Uterus (tissue), 4 donors: ENCODE measurements at regions of chr10 and their contacts with region 1.

Region 1: DNA sequence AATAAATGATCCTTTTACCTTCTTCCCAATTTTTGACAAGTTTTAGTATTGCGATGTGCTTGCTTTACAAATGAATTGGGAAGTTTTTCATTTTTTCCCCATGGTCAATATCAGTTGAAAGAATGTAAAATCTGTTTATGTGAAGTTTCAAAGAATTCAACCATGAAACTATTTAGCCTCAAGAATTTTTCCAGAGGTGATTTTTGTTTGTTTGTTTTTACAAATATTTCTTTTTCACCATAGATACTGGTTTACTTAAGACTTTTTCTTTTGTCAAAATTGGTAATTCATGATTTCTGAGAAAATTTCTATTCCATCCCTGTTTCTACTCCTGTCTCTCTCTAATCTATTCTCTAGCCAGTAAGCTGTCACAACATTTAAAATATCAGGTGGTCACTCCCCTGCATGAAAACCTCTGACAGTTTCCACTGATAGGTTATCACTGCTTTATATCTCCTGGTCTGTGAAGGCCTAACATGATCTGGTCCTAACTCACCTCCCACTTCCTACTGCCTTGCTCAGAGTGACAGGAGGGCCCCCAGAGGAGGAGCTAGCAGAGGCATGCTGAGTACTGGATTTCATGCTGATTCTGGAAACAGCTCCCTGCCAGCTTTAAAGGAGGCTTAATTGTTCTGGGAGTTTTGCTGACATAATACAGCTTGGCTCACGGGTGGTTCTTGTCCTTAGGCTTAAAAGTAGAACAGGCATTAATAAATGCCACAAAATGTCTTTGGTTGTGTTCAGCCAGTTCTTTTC is 7.6 kb upstream of the ARMS2 start:
- DNase-seq: no peak
- H3K4me3 ChIP-seq: no peak overlapping the region
- H3K27ac ChIP-seq: no peak overlapping the region
- H3K4me1 ChIP-seq: no peaks in the 10 kb centered on the region
- H3K27me3 ChIP-seq: no peaks in the 10 kb centered on the region
- CTCF ChIP-seq: no peak
- POLR2A ChIP-seq: no peak

Region 2: GRCh38 chr10:122565728-122566206 is 118.9 kb after region 1 on chr10:
- intact Hi-C with region 1: loop called (anchors 10 kb)
- DNase-seq: peak; percentile 85 to 86
- H3K4me3 ChIP-seq: no peak overlapping the region
- H3K27ac ChIP-seq: no peak overlapping the region
- H3K4me1 ChIP-seq: no peaks in the 10 kb centered on the region
- H3K27me3 ChIP-seq: no peaks in the 10 kb centered on the region
- CTCF ChIP-seq: peak; percentile 82 to 92 (median 86)
- POLR2A ChIP-seq: peak in 1 of 2 donors; percentile 17

Region 3: DNA sequence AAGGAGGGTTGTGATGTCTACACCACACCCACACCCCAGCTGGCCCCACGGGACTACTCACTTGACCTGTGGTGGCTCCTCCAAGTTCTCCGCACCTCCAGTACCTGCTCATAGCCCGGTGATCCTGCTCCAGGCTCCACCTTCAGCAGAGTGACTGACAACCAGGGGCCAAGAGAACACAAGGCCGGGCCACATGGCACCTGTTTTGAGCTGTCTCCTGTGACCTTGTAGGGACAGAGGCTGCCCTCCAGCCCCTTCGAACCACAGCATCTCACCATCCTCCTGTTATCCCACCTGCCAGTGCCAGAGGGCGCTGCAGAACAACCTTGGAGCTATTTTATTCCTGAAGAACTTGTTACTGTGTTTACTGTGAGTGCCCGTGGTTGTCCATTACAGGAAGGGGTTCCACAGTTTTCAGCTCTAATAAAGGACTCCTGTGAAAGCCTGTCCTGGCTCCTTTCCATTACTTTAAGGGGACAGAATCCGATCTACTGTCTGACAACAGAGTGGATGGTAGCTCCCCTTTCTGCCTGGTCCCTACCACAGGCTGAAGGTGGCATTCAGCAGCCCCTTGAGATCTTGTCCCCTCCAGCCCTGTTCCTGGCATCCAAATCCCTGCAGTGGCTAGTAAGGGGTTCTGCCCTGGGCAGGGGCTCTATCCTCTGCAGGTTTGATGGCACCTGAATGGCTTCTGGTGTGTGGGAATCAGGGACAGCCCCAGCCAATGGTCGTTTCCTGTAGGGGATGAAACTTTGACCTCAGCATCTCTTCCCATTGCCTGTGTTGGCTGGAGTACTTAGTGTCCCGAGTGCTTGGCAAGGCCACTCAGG is 202.0 kb after region 1 on chr10:
- intact Hi-C with region 1: no loop called
- DNase-seq: no peak
- H3K4me3 ChIP-seq: no peak overlapping the region
- H3K27ac ChIP-seq: no peak overlapping the region
- H3K4me1 ChIP-seq: no peaks in the 10 kb centered on the region
- H3K27me3 ChIP-seq: no peaks in the 10 kb centered on the region
- CTCF ChIP-seq: no peak
- POLR2A ChIP-seq: no peak